Lower leg skin (tissue), 4 donors: ENCODE measurements at regions of chr6 and their contacts with region 1.

Region 1: GRCh38 chr6:138001750-138002349 is 105.4 kb downstream of the PERP start:
- DNase-seq: peak; percentile 66 to 92
- H3K4me3 ChIP-seq: no peak overlapping the region
- CTCF ChIP-seq: peak in 1 of 3 donors; percentile 58
- POLR2A ChIP-seq: no peak

Region 2: DNA sequence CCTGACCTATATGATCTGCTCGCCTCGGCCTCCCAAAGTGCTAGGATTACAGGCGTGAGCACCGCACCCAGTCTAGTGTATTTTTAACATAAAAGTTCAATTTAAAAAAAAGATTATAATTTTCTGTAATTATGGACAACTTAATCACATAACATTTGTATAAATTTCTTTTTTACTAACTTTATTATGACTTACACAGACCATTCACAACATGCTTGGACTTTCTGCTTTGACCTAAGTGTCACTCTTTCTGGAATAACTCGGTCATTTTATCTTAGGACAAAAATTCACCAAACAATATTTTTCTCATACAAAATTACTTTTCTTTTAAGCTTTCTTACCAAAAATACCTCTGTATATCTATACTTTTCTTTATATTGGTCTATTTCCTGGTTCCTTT is 813.0 kb before region 1 on chr6:
- intact Hi-C with region 1: no loop called
- DNase-seq: no peak
- H3K4me3 ChIP-seq: no peak overlapping the region
- CTCF ChIP-seq: no peak
- POLR2A ChIP-seq: no peak

Region 3: GRCh38 chr6:138109042-138109997 is 107.5 kb after region 1 on chr6:
- intact Hi-C with region 1: loop called (anchors 5 kb)
- DNase-seq: peak; percentile 82 to 97
- H3K4me3 ChIP-seq: no peak overlapping the region
- CTCF ChIP-seq: peak in 2 of 3 donors; percentile 56 to 63
- POLR2A ChIP-seq: no peak